ENCODE measurements at regions of chr22 and their contacts with region 1.

Region 1: DNA sequence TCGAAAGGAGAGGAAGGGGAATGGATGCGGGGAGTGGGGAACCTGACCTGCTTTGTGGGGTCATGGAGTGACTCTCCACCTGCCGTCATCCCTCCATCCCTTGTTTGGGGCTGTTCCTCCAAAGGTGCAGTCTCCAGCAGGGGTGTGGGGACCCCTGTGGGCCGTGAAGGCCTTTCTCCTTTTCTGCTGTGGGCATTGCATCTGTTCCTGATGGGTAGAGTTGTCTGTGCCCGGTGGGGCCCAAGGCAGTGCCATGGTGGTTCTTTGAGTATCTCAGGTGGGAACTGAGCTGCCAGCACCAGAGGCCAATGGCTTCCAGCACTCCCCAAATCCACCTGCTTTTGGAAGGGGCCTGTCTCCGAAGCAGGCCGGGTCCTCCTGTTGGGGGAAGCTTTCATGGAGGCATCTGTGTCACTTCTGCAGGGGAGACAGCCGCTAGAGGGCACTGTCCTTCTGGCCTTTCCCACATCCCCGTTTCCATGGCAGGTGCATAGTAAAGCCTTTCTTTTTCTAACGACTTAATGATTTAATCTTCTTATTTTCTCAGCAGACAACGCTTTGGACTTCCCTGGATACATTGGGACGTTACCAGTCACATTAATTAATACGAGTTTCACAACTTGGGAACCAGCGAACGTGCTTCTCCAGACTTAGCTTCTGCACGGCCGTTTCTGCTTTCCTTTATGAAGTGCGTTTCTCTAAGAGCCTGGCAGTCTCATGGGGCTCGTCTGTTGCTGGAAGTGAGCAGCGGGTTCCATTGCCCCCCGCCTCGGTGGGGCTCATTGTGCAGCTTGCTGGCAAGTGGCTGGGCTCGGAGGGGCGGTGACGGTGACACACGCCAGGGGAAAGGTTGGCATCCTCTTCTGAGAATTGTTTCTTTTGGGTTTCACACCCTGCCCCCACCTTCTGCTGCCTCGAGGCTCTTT is 57.1 kb downstream of the PARVB start:
- DNase-seq: peak; percentile 72 to 91 (median 82)
- H3K4me3 ChIP-seq: peak overlapping the region in 56 of 59 donors; percentile 4 to 63 (median 42)
- H3K27ac ChIP-seq: peak overlapping the region in 8 of 59 donors; percentile 11 to 46 (median 28)
- H3K27me3 ChIP-seq: no peaks in the 10 kb centered on the region
- CTCF ChIP-seq: peak; percentile 57 to 96 (median 89)

Region 2: DNA sequence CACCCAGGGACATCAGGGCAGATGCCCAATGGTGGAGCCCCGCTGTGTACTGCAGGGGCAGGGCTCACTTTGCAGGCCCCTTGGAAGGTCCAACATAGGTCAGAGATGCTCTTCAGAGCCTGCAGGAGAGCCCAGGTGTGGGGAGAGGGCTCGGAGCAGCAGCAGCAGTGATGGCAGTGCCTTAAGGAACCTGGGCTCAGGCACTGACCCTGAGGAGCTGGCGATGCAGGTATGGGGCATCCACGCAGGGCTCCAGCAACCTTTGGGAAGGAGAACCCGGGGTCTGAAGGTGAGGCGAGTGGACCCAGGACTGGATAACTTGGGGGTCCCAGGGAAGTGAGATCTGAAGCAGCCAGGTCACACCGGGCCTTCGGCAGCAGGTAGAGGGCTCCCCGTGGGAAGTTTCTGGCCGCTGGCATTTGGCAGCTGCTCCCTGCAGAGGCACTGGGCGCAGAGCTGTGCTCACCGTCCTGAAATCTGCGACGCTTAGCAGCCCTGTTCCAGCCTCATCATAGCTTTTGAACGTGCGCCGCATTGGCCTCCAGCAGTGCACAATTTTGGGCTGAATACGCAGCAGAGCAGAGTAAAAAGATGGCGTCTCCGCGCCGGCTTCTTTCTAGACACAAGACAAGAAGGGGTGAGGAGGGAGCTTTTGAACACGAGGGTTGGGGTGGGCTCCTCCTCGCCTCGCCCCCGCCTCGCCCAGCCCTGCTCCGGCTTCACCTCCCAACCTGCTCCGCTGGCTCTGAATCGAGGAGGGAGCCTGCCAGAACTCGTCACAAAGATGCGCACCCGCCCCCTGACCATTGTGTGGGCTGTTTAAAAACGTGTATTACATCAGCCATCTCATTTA is 550.6 kb before region 1 on chr22:
- intact Hi-C with region 1: no loop called
- DNase-seq: peak in 7 of 10 donors; percentile 50 to 76 (median 63)
- H3K4me3 ChIP-seq: peak overlapping the region in 4 of 59 donors; percentile 3 to 10 (median 7)
- H3K27ac ChIP-seq: peak overlapping the region in 58 of 59 donors; percentile 2 to 90 (median 73)
- H3K27me3 ChIP-seq: no peaks in the 10 kb centered on the region
- CTCF ChIP-seq: no peak

Region 3: GRCh38 chr22:43993027-43993760 is 88.0 kb before region 1 on chr22:
- intact Hi-C with region 1: loop called in 1 of 2 experiments (anchors 10 kb)
- DNase-seq: peak in 8 of 10 donors; percentile 24 to 69 (median 55)
- H3K4me3 ChIP-seq: no peak overlapping the region
- H3K27ac ChIP-seq: peak overlapping the region in 42 of 59 donors; percentile 1 to 82 (median 61)
- H3K27me3 ChIP-seq: no peaks in the 10 kb centered on the region
- CTCF ChIP-seq: peak; percentile 79 to 99 (median 95)

Region 4: DNA sequence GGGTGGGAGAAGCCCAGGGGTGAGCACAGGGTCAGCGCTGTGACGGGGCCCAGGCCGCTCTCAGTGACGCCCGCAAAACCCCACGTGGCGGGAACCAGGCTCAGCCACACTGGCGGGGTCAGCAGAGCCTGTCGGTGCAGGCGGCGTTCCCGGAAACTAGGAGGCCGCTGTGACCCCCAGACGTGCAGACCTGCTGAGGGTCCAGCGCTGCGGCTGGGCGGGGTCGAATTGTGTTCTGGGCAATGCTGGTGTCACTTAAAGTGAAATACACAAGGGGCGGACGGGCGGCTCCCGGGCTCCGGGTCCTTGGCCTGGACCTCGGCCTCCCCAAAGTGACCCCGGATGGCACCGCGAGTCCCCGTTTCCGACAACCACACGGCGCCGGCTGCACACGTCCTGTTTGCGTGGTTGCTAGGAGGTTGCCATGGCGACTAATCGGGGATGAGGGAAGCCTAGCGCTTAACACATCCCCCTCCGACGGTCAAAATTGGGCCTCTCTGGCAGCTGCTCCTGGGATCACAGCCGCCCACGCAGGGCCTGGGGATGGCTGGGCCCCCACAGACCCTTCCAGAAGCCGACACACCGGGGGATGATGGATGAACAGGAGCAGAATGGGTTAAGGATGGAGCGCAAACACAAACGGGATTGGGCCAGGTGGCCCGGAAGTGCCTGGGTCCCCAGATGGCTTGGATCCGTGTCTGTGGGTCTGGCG is 539.1 kb after region 1 on chr22:
- intact Hi-C with region 1: loop called in 1 of 2 experiments (anchors 5 kb)
- DNase-seq: peak in 5 of 10 donors; percentile 44 to 66 (median 59)
- H3K4me3 ChIP-seq: peak overlapping the region in 12 of 59 donors; percentile 9 to 48 (median 23)
- H3K27ac ChIP-seq: no peak overlapping the region
- H3K27me3 ChIP-seq: peaks cover 0 to 36% (median 12%) of the 10 kb centered on the region in 45 donors
- CTCF ChIP-seq: no peak